ENCODE measurements at regions of chr1 and their contacts with region 1.

Region 1: DNA sequence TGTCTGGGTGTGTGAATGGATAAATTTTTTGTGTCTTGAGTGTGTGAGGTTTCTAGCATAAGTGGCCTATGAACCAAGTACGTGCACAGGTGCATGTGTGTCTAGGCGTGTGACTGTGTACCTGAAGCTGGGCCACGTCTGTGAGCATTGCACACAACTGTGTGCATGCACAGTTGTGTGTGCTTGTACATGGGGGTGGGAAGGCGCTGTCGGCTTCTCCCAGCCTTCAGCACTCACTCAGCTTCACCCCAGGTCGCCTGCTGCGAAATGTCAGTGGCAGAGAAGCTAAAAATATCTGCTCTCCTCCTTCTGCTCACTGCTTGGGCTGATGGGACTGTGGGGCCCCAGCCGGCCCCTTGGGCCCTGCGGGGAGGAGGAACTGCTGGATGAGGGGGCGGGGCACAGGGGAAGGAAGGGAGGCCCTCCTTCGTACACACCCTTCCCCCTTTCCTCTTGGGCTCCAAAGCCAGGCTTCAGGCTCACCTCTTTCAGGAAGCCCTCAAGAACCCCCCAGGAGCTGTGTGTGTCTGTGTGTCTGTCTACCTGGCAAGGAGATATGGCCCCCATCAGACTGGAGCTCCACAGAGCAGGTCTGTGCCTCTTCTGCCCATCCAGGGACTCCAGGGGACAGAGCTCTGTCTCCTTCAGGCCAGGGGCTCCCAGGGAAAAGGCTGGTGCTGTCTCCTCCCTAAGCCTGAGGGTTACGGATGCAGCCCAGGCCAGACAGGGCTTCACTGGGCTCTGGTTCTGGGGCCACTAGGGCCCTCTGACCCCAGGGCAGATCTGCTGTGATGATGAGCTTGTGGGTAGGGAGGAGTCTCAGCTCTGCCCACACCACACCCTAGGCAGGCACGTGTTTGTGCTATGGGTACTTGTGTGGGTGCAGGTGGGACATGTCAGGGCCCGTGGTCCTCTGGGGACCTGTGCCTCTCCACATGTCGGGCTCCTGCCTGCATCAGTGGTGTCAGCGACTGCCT is 35.6 kb upstream of the WASF2 start:
- DNase-seq: peak in 8 of 9 donors; percentile 41 to 67 (median 52)
- ATAC-seq: peak; percentile 36
- H3K4me3 ChIP-seq: peak overlapping the region; percentile 53
- H3K4me3 Mint-ChIP-seq: peak overlapping the region; percentile 72 to 98 (median 93)
- H3K27ac ChIP-seq: peak overlapping the region; percentile 93
- H3K27ac Mint-ChIP-seq: peak overlapping the region; percentile 80 to 99 (median 98)
- H3K4me1 ChIP-seq: peaks cover 62% of the 10 kb centered on the region in 2 donors
- H3K4me1 Mint-ChIP-seq: peaks cover 63 to 82% (median 74%) of the 10 kb centered on the region in 7 donors
- H3K27me3 ChIP-seq: no peaks in the 10 kb centered on the region
- H3K27me3 Mint-ChIP-seq: no peaks in the 10 kb centered on the region

Region 2: DNA sequence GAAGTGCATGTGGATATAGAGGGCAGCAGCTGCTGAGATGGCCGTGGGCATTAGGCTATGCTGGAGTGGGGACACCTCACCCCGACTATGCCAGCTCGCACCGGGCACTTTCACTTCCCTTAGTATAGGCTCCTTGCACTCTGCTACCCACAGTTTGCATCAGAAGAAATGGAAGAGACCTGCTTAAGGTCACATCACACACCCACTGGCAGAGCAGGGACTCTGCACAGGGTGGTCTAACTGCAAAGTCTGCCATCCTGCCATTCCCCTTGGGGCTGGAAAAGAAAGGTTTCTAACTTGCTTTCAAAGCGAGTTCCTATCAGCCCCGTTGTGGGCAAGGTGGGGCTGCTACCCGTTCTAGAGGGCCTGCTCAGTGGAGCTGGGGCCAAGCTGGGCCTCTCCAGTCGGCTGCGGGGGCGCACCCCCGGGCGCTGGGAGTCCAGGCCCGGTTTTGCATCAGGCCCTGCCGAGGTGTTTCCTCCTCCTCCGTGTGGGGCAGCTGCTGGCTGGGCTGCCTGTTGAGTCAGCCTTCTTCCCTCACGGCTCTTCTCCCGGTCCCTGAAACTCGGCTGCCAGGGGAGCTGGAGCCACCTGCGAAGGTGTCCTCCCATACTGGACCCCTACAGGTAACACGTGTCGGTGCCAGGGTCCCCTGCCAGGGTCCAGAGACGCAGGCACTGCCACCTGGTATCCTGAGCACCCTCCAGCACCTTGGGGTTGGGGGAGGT is 183.9 kb before region 1 on chr1 and contains the start of gene SYTL1:
- CTCF ChIA-PET with region 1: no interaction called
- POLR2A ChIA-PET with region 1: no interaction called
- intact Hi-C with region 1: loop called in 1 of 2 experiments (anchors 2 kb)
- DNase-seq: peak; percentile 49 to 72 (median 60)
- ATAC-seq: peak; percentile 74
- H3K4me3 ChIP-seq: peak within 1 kb of the TSS; percentile 85
- H3K4me3 Mint-ChIP-seq: peak within 1 kb of the TSS; percentile 91 to 100 (median 96)
- H3K27ac ChIP-seq: peak within 1 kb of the TSS; percentile 87
- H3K27ac Mint-ChIP-seq: peak within 1 kb of the TSS; percentile 86 to 98 (median 94)
- H3K4me1 ChIP-seq: peaks cover 11 to 29% of the 10 kb centered on the region in 2 donors
- H3K4me1 Mint-ChIP-seq: peaks cover 22 to 68% (median 53%) of the 10 kb centered on the region in 7 donors
- H3K27me3 ChIP-seq: no peaks in the 10 kb centered on the region
- H3K27me3 Mint-ChIP-seq: no peaks in the 10 kb centered on the region
- total RNA-seq, gene SYTL1: 107 to 172 (median 136) TPM

Region 3: DNA sequence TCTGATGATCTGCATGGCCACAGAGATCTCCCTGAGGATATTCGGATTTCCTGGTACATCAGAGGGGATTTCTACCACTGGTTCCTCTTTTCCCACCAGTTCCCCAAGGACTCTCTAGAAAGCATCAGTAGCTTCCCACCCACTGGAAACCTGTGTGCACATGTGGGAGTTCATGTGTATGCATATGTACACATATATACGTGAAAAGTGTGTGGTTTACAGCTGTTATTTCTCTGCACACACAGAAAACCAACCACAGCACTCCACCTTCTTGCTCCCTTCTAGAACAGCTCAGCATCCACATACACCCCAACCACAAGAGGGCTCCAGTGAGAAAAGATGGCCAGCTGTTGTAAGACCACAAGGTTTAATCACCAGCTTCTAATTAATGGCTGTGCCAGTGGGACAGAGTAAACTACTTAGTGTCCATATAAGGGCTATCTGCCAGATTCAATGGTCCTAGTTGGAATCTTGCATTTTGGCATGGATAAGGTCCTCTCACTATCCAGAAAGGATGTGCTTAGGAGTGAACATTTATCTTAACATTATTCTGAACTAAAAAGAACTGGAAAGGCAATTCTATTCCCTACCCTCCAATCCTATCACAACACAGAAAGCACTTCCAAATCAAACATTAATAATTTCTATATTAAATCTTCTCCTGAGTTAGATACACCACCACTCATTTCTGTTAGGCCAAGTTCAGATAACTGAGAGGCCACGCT is 109.0 kb before region 1 on chr1:
- CTCF ChIA-PET with region 1: interaction called, 5 read pairs
- POLR2A ChIA-PET with region 1: interaction called, 5 read pairs
- intact Hi-C with region 1: loop called (anchors 1 to 2 kb)
- DNase-seq: peak in 7 of 9 donors; percentile 44 to 67 (median 56)
- ATAC-seq: peak; percentile 87
- H3K4me3 ChIP-seq: no peak overlapping the region
- H3K4me3 Mint-ChIP-seq: no peak overlapping the region
- H3K27ac ChIP-seq: peak overlapping the region; percentile 10
- H3K27ac Mint-ChIP-seq: peak overlapping the region; percentile 3 to 85 (median 53)
- H3K4me1 ChIP-seq: peaks cover 0 to 11% of the 10 kb centered on the region in 2 donors
- H3K4me1 Mint-ChIP-seq: peaks cover 12 to 46% (median 35%) of the 10 kb centered on the region in 7 donors
- H3K27me3 ChIP-seq: no peaks in the 10 kb centered on the region
- H3K27me3 Mint-ChIP-seq: no peaks in the 10 kb centered on the region

Region 4: GRCh38 chr1:27436204-27437159 is 89.1 kb before region 1 on chr1:
- CTCF ChIA-PET with region 1: no interaction called
- POLR2A ChIA-PET with region 1: interaction called, 4 read pairs
- intact Hi-C with region 1: loop called (anchors 1 to 5 kb)
- DNase-seq: peak in 7 of 9 donors; percentile 37 to 55 (median 48)
- ATAC-seq: peak; percentile 88
- H3K4me3 ChIP-seq: peak overlapping the region; percentile 5
- H3K4me3 Mint-ChIP-seq: peak overlapping the region; percentile 70 to 89 (median 79)
- H3K27ac ChIP-seq: peak overlapping the region; percentile 68
- H3K27ac Mint-ChIP-seq: peak overlapping the region; percentile 77 to 96 (median 91)
- H3K4me1 ChIP-seq: peaks cover 53 to 75% of the 10 kb centered on the region in 2 donors
- H3K4me1 Mint-ChIP-seq: peaks cover 53 to 87% (median 73%) of the 10 kb centered on the region in 7 donors
- H3K27me3 ChIP-seq: no peaks in the 10 kb centered on the region
- H3K27me3 Mint-ChIP-seq: no peaks in the 10 kb centered on the region

Region 5: DNA sequence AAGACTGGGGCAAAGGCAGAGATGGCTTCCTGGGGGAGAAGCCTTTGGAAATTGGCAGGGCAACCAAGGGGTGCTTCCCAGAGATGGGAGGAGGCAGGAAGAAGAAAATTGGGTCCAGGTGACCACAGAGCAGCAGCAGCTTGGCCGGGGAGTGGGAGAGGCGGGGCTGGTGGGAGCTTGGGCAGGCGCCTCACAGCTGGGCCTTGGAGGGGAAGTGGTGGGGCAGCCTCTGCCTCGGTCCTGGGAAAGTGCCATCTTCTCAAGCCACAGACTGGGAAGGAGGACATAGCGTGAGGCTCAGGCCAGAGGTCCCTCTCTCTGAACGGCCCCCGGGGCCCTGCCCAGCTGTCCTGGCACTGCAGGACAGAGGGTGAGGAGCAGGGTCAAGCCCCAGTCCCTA is 11.6 kb before region 1 on chr1:
- CTCF ChIA-PET with region 1: interaction called, 4 read pairs
- POLR2A ChIA-PET with region 1: interaction called, 11 read pairs
- intact Hi-C with region 1: no loop called
- DNase-seq: no peak
- ATAC-seq: no peak
- H3K4me3 ChIP-seq: no peak overlapping the region
- H3K4me3 Mint-ChIP-seq: no peak overlapping the region
- H3K27ac ChIP-seq: no peak overlapping the region
- H3K27ac Mint-ChIP-seq: no peak overlapping the region
- H3K4me1 ChIP-seq: peaks cover 0 to 6% of the 10 kb centered on the region in 2 donors
- H3K4me1 Mint-ChIP-seq: peaks cover 12 to 25% (median 19%) of the 10 kb centered on the region in 7 donors
- H3K27me3 ChIP-seq: no peaks in the 10 kb centered on the region
- H3K27me3 Mint-ChIP-seq: no peaks in the 10 kb centered on the region

Region 6: DNA sequence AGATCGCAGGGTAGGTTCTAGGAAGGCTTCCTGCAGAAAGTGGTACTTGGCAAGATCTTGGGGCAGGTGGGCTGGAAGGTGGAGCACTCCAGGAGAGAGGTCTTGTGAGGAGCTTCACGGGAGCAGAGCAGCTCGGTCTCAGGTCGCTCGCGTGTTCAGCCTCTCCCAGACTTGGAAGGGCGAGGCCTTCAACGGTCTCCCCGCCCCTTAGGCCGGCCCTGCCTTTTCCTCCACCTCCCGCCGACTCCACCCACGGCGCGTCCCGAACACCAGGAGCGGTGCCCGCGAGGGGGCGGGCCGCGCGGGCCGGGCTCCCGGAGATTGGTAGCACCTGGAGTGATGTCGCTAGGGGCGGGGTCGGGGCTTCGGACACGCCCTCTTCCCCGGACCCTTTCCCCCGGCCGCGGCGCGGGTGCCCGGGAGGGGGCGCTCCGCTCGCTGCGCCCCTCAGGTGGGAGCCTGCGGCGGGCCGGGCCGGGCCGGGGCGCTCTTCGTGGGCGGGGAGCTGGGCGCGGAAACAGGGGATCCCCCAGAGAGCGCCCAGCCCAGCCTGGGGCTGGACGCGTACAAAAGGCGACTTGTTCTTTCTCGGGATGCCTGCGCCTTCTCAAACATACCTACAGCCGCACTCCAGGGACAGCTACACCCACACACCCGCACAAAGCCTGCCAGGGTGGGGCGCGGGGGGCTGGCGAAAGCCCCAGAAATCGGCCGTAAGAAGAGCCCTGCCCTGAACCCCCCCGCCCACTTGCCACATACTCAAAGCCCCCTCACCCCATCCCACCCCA is 42.9 kb after region 1 on chr1:
- CTCF ChIA-PET with region 1: interaction called, 5 read pairs
- POLR2A ChIA-PET with region 1: interaction called, 7 read pairs
- intact Hi-C with region 1: loop called (anchors 1 kb)
- DNase-seq: peak; percentile 87 to 96 (median 91)
- ATAC-seq: peak; percentile 96
- H3K4me3 ChIP-seq: peak overlapping the region; percentile 51
- H3K4me3 Mint-ChIP-seq: peak overlapping the region; percentile 55 to 88 (median 78)
- H3K27ac ChIP-seq: peak overlapping the region; percentile 68
- H3K27ac Mint-ChIP-seq: peak overlapping the region; percentile 64 to 93 (median 83)
- H3K4me1 ChIP-seq: peaks cover 7 to 19% of the 10 kb centered on the region in 2 donors
- H3K4me1 Mint-ChIP-seq: peaks cover 15 to 57% (median 51%) of the 10 kb centered on the region in 7 donors
- H3K27me3 ChIP-seq: no peaks in the 10 kb centered on the region
- H3K27me3 Mint-ChIP-seq: no peaks in the 10 kb centered on the region

Measured in naive thymus-derived CD4-positive, alpha-beta T cell (primary cell).